ENCODE measurements at regions of chr2 and their contacts with region 1.

Region 1: DNA sequence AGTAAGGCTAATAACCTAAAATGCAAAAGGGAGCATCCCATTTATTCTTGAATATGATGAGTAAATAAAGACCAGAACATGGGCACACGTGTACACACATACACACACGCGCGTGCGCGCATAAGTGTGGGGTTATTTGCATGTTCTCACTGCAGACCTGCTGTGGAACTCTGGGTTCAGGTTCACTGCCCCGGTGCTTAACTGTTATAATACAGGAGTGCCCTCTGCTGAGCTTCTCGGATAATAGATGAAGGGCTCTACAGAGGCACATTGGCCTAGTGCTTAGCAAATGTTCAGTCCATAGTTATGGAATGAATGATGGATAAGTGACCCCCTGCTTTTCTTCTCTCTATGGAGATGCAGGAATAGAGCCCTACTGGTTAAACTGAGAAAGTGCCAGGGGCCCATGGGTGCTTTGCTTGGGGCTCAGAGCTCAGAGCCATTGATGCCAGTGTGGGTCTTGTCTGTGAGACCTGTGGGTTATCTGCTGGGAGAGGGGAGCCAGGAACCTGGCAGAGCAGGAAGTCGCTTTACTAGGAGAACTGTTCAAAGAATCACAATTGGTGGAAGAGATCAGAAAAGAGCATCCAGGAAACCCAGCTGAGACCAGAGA is 3.6 kb upstream of the ARL4C start:
- DNase-seq: peak; percentile 45 to 90 (median 76)
- ATAC-seq: peak; percentile 45
- H3K4me3 ChIP-seq: no peak overlapping the region
- H3K4me3 Mint-ChIP-seq: no peak overlapping the region
- H3K27ac ChIP-seq: no peak overlapping the region
- H3K27ac Mint-ChIP-seq: peak overlapping the region; percentile 92
- H3K4me1 ChIP-seq: peaks cover 32% of the 10 kb centered on the region
- H3K4me1 Mint-ChIP-seq: peaks cover 27% of the 10 kb centered on the region
- H3K27me3 ChIP-seq: no peaks in the 10 kb centered on the region
- H3K27me3 Mint-ChIP-seq: no peaks in the 10 kb centered on the region
- CTCF ChIP-seq: peak; percentile 77

Region 2: GRCh38 chr2:233418761-233419625 is 1081.5 kb before region 1 on chr2:
- CTCF ChIA-PET with region 1: no interaction called
- POLR2A ChIA-PET with region 1: no interaction called
- intact Hi-C with region 1: loop called in 1 of 2 experiments (anchors 10 kb)
- DNase-seq: peak; percentile 12 to 88 (median 74)
- ATAC-seq: peak; percentile 72
- H3K4me3 ChIP-seq: peak overlapping the region; percentile 44 to 61
- H3K4me3 Mint-ChIP-seq: peak overlapping the region; percentile 89
- H3K27ac ChIP-seq: peak overlapping the region; percentile 55 to 65
- H3K27ac Mint-ChIP-seq: peak overlapping the region; percentile 98
- H3K4me1 ChIP-seq: peaks cover 96% of the 10 kb centered on the region
- H3K4me1 Mint-ChIP-seq: peaks cover 96% of the 10 kb centered on the region
- H3K27me3 ChIP-seq: no peaks in the 10 kb centered on the region
- H3K27me3 Mint-ChIP-seq: no peaks in the 10 kb centered on the region
- CTCF ChIP-seq: no peak

Region 3: DNA sequence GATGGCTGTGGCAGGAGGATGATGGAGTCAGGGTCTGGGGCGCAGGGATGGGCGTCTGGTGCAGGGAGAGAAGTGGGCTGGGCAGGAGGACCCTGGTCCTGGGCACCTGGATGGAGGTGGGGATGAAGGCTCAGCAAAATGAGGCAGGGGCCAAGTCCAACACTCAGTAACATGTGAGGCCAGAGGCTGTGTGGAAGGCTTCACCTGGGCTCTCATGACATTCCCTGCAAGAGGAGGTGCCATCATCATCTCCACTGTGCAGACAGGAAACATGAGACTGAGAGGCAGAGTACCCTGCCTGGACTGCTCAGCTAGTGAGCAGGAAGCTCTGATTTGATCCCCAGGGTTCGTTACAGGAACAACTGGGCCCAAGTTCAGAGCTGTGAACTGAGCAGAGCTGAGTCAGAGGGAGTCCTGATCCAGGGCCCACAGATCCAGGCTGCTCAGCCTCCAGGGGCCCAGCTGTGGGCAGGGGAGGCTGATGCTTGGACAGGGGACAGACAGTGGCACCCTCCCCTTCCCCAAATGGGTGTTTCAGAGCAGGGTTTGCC is 683.1 kb before region 1 on chr2:
- CTCF ChIA-PET with region 1: no interaction called
- POLR2A ChIA-PET with region 1: no interaction called
- intact Hi-C with region 1: no loop called
- DNase-seq: no peak
- ATAC-seq: no peak
- H3K4me3 ChIP-seq: no peak overlapping the region
- H3K4me3 Mint-ChIP-seq: no peak overlapping the region
- H3K27ac ChIP-seq: no peak overlapping the region
- H3K27ac Mint-ChIP-seq: no peak overlapping the region
- H3K4me1 ChIP-seq: no peaks in the 10 kb centered on the region
- H3K4me1 Mint-ChIP-seq: no peaks in the 10 kb centered on the region
- H3K27me3 ChIP-seq: no peaks in the 10 kb centered on the region
- H3K27me3 Mint-ChIP-seq: peaks cover 8% of the 10 kb centered on the region
- CTCF ChIP-seq: no peak

Region 4: DNA sequence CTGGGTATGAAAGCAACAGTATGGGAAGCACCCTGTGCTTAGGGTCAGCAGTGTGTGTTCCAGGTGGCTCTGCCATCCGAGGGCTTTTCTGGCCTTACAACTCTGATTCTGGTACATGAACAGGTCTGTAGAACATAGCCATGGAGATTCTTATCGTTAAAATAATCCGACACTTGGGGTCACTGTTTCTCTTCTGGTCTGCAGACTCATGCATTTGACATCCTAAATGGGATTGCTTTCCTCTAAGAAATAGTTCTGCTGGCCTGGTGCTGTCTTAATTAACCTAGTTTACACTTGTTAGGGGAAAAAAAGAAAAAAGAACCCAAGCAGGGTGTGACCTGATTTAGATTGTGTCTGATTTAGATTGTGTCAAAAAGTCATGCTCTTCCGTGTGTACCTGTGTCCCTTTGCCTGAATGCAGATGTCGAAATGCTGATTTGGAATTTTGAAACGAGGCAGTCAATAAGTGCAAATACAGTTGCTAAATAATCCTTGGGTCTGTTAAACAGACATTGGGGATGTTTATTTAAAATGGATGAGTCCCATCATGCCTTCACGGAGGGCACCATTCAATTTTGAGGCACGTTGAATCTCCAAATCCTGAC is 523.7 kb before region 1 on chr2:
- CTCF ChIA-PET with region 1: interaction called, 27 read pairs
- POLR2A ChIA-PET with region 1: no interaction called
- intact Hi-C with region 1: loop called (anchors 1 kb)
- DNase-seq: peak in 4 of 9 experiments; percentile 28 to 82 (median 66)
- ATAC-seq: peak; percentile 71
- H3K4me3 ChIP-seq: no peak overlapping the region
- H3K4me3 Mint-ChIP-seq: no peak overlapping the region
- H3K27ac ChIP-seq: no peak overlapping the region
- H3K27ac Mint-ChIP-seq: peak overlapping the region; percentile 8
- H3K4me1 ChIP-seq: peaks cover 8% of the 10 kb centered on the region
- H3K4me1 Mint-ChIP-seq: peaks cover 29% of the 10 kb centered on the region
- H3K27me3 ChIP-seq: no peaks in the 10 kb centered on the region
- H3K27me3 Mint-ChIP-seq: no peaks in the 10 kb centered on the region
- CTCF ChIP-seq: peak; percentile 58

Region 5: DNA sequence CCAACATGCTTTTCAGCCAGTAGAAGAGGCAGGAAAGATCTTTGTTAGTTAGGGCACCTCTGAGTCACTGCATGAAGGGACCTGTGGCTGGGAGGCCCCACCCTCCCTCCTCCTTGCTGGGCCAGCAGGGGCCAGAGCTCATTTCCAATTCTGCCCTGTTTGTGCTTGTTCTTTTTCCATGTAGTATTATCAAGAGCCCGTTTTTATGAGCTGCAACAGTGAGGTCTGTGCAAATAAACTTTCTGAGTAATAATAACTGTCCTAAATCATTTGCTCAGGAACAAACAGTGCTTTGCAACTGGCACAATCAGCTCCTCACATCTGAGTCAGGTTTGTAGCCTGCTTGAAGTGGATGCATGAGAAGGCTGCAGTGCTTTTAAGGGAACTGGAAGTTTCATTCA is 131.6 kb before region 1 on chr2:
- CTCF ChIA-PET with region 1: interaction called, 3 read pairs
- POLR2A ChIA-PET with region 1: interaction called, 4 read pairs
- intact Hi-C with region 1: loop called in 1 of 2 experiments (anchors 5 kb)
- DNase-seq: peak in 8 of 9 experiments; percentile 31 to 70 (median 57)
- ATAC-seq: peak; percentile 74
- H3K4me3 ChIP-seq: no peak overlapping the region
- H3K4me3 Mint-ChIP-seq: peak overlapping the region; percentile 7
- H3K27ac ChIP-seq: peak overlapping the region in 1 of 2 experiments; percentile 54
- H3K27ac Mint-ChIP-seq: peak overlapping the region; percentile 87
- H3K4me1 ChIP-seq: peaks cover 73% of the 10 kb centered on the region
- H3K4me1 Mint-ChIP-seq: peaks cover 77% of the 10 kb centered on the region
- H3K27me3 ChIP-seq: no peaks in the 10 kb centered on the region
- H3K27me3 Mint-ChIP-seq: no peaks in the 10 kb centered on the region
- CTCF ChIP-seq: no peak

Region 6: GRCh38 chr2:234446404-234447076 is 54.0 kb before region 1 on chr2:
- CTCF ChIA-PET with region 1: interaction called, 7 read pairs
- POLR2A ChIA-PET with region 1: interaction called, 102 read pairs
- intact Hi-C with region 1: no loop called
- DNase-seq: peak; percentile 63 to 97 (median 81)
- ATAC-seq: peak; percentile 84
- H3K4me3 ChIP-seq: no peak overlapping the region
- H3K4me3 Mint-ChIP-seq: peak overlapping the region; percentile 70
- H3K27ac ChIP-seq: peak overlapping the region; percentile 90 to 94
- H3K27ac Mint-ChIP-seq: peak overlapping the region; percentile 98
- H3K4me1 ChIP-seq: peaks cover 82% of the 10 kb centered on the region
- H3K4me1 Mint-ChIP-seq: peaks cover 84% of the 10 kb centered on the region
- H3K27me3 ChIP-seq: no peaks in the 10 kb centered on the region
- H3K27me3 Mint-ChIP-seq: no peaks in the 10 kb centered on the region
- CTCF ChIP-seq: no peak

Region 7: GRCh38 chr2:234483568-234484251 is 16.8 kb before region 1 on chr2:
- CTCF ChIA-PET with region 1: interaction called, 6 read pairs
- POLR2A ChIA-PET with region 1: interaction called, 5 read pairs
- intact Hi-C with region 1: loop called in 1 of 2 experiments (anchors 1 kb)
- DNase-seq: peak; percentile 70 to 97 (median 87)
- ATAC-seq: peak; percentile 76
- H3K4me3 ChIP-seq: peak overlapping the region; percentile 0 to 12
- H3K4me3 Mint-ChIP-seq: peak overlapping the region; percentile 64
- H3K27ac ChIP-seq: peak overlapping the region; percentile 78 to 89
- H3K27ac Mint-ChIP-seq: peak overlapping the region; percentile 98
- H3K4me1 ChIP-seq: peaks cover 62% of the 10 kb centered on the region
- H3K4me1 Mint-ChIP-seq: peaks cover 84% of the 10 kb centered on the region
- H3K27me3 ChIP-seq: no peaks in the 10 kb centered on the region
- H3K27me3 Mint-ChIP-seq: no peaks in the 10 kb centered on the region
- CTCF ChIP-seq: peak; percentile 70

Region 8: GRCh38 chr2:234564699-234565098 is 64.2 kb after region 1 on chr2:
- CTCF ChIA-PET with region 1: no interaction called
- POLR2A ChIA-PET with region 1: no interaction called
- intact Hi-C with region 1: no loop called
- DNase-seq: no peak
- ATAC-seq: no peak
- H3K4me3 ChIP-seq: no peak overlapping the region
- H3K4me3 Mint-ChIP-seq: no peak overlapping the region
- H3K27ac ChIP-seq: no peak overlapping the region
- H3K27ac Mint-ChIP-seq: no peak overlapping the region
- H3K4me1 ChIP-seq: no peaks in the 10 kb centered on the region
- H3K4me1 Mint-ChIP-seq: no peaks in the 10 kb centered on the region
- H3K27me3 ChIP-seq: no peaks in the 10 kb centered on the region
- H3K27me3 Mint-ChIP-seq: peaks cover 19% of the 10 kb centered on the region
- CTCF ChIP-seq: no peak

Region 9: GRCh38 chr2:234932591-234933168 is 432.2 kb after region 1 on chr2:
- CTCF ChIA-PET with region 1: no interaction called
- POLR2A ChIA-PET with region 1: no interaction called
- intact Hi-C with region 1: no loop called
- DNase-seq: no peak
- ATAC-seq: no peak
- H3K4me3 ChIP-seq: no peak overlapping the region
- H3K4me3 Mint-ChIP-seq: no peak overlapping the region
- H3K27ac ChIP-seq: no peak overlapping the region
- H3K27ac Mint-ChIP-seq: no peak overlapping the region
- H3K4me1 ChIP-seq: no peaks in the 10 kb centered on the region
- H3K4me1 Mint-ChIP-seq: no peaks in the 10 kb centered on the region
- H3K27me3 ChIP-seq: no peaks in the 10 kb centered on the region
- H3K27me3 Mint-ChIP-seq: peaks cover 12% of the 10 kb centered on the region
- CTCF ChIP-seq: no peak

Measured in CD8-positive, alpha-beta T cell (primary cell).